ENCODE measurements at regions of chr3 and their contacts with region 1.

Region 1: DNA sequence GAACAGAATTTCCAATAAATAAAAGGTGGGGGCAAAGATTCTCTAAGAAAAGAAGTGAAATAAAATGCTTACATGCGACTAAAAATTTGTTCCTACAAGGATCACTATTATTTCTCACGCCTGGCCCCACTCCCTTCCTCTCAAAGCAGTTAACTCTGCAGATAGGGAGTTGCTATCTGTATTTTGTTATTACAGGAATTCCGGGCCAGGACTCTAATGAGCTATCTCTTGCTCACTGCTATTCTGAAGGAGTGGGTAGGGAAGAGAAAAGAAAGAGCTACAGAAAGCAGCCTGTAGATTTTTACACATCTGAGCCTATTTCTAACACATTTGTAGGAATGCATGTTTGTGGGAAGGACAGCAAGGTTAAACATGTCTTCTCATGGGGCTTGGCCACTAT is 140.4 kb downstream of the PCCB start:
- H3K4me3 ChIP-seq: no peak overlapping the region
- H3K27ac ChIP-seq: no peak overlapping the region
- H3K4me1 ChIP-seq: no peaks in the 10 kb centered on the region
- CTCF ChIP-seq: no peak

Region 2: DNA sequence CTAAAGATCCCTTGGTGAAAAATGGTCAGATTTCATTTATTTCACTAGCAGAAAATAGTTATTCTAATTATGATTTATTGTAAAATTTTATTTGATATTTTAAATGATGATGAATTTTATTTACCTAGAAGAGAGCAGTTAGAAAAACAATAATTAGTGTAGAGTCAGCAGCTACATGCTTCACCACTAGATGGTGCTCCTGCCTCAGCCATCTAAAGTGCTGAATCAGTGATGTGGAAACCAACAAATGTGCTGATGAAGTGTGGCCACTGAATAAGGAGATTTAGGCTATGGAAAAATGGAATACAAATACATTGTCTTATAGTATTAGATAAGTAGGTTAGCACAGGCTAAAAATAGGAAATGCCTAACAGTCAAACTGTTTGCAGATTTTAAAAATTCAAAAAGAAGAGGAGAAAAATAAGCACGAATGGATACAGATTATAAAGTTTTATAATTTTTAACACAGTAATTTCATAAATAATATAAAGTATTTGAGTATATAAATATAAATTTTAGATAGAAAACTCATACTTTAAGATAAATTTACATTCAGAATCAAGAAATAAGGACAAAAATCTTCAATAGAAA is 315.3 kb before region 1 on chr3:
- CTCF ChIA-PET with region 1: interaction called, 11 read pairs
- POLR2A ChIA-PET with region 1: no interaction called
- H3K4me3 ChIP-seq: no peak overlapping the region
- H3K27ac ChIP-seq: no peak overlapping the region
- H3K4me1 ChIP-seq: 0 out of 2 replicates have a peak, but pooled peaks cover 5% of the 10 kb centered on the region
- CTCF ChIP-seq: peak; percentile 59

Region 3: DNA sequence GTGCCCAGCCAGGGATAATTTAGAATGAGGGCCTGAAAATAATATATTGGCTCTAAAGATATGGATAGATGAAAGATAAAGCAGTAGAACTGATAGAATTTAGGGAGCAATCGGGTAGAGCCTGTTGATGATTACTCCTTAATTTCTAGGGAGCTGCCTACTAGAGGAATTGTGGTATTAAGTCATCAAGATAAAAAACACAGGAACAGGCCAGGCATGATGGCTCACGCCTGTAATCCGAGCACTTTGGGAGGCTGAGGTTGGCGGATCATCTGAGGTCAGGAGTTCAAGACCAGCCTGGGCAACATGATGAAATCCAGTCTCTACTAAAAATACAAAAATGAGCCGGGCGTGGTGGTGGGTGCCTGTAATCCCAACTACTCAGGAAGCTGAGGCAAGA is 10.0 kb before region 1 on chr3:
- CTCF ChIA-PET with region 1: interaction called, 10 read pairs
- POLR2A ChIA-PET with region 1: no interaction called
- H3K4me3 ChIP-seq: no peak overlapping the region
- H3K27ac ChIP-seq: no peak overlapping the region
- H3K4me1 ChIP-seq: no peaks in the 10 kb centered on the region
- CTCF ChIP-seq: no peak

Region 4: GRCh38 chr3:136512381-136512780 is 121.8 kb after region 1 on chr3:
- CTCF ChIA-PET with region 1: no interaction called
- POLR2A ChIA-PET with region 1: no interaction called
- H3K4me3 ChIP-seq: no peak overlapping the region
- H3K27ac ChIP-seq: no peak overlapping the region
- H3K4me1 ChIP-seq: no peaks in the 10 kb centered on the region
- CTCF ChIP-seq: no peak

Region 5: DNA sequence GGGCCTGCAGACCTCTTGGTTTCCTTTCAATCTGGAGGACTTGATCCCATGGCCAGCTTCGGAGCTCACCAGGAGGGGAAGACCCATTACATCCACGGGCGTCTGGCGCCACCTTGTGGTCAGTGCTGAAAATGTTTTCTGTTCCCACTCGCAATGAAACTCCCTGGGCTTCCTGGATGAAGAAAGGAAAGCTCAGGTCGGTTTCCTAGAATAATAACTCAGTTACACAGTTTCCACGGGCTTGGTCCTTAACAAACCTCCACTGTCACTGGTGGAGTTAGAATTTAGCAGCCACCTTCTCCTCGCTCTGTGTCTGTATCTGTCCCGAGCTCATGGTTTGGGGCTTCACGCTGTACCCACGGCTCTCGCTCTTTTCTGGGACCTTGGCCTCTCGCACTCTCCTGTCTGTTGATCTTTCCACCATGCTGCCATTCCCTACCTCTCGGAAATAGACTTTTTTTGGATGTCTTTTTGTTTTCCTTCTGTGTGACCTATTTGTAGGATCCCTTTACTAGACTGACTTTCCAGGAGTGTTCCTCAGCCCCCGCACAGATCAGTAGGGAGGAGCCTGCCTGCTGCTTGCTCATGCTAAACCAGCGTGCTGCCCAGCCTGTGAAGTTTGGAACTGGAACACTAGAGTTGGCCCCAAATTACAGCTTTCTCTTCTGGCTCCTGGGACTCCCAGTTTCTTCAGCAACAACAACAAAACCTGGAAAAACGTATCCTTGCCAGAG is 623.5 kb after region 1 on chr3:
- CTCF ChIA-PET with region 1: interaction called, 18 read pairs
- POLR2A ChIA-PET with region 1: interaction called, 3 read pairs
- H3K4me3 ChIP-seq: peak overlapping the region; percentile 1
- H3K27ac ChIP-seq: no peak overlapping the region
- H3K4me1 ChIP-seq: no peaks in the 10 kb centered on the region
- CTCF ChIP-seq: peak; percentile 71